ENCODE measurements at regions of chr15 and their contacts with region 1.

Region 1: GRCh38 chr15:95734422-95735316 is 595.8 kb upstream of the NR2F2 start:
- DNase-seq: peak; percentile 96
- H3K4me3 ChIP-seq: no peak overlapping the region
- H3K27ac ChIP-seq: peak overlapping the region; percentile 70
- H3K4me1 ChIP-seq: peaks cover 28% of the 10 kb centered on the region
- H3K27me3 ChIP-seq: no peaks in the 10 kb centered on the region
- CTCF ChIP-seq: no peak
- POLR2A ChIP-seq: peak; percentile 50

Region 2: GRCh38 chr15:95459273-95459672 is 275.4 kb before region 1 on chr15:
- CTCF ChIA-PET with region 1: no interaction called
- POLR2A ChIA-PET with region 1: no interaction called
- dilution Hi-C with region 1: no loop called
- intact Hi-C with region 1: loop called (anchors 2 kb)
- DNase-seq: peak; percentile 90
- H3K4me3 ChIP-seq: peak overlapping the region in 1 of 3 experiments; percentile 51
- H3K27ac ChIP-seq: peak overlapping the region; percentile 85
- H3K4me1 ChIP-seq: peaks cover 41% of the 10 kb centered on the region
- H3K27me3 ChIP-seq: no peaks in the 10 kb centered on the region
- CTCF ChIP-seq: no peak
- POLR2A ChIP-seq: peak; percentile 65

Region 3: GRCh38 chr15:95669146-95669939 is 65.3 kb before region 1 on chr15:
- CTCF ChIA-PET with region 1: no interaction called
- POLR2A ChIA-PET with region 1: interaction called, 20 read pairs
- dilution Hi-C with region 1: no loop called
- intact Hi-C with region 1: no loop called
- DNase-seq: peak; percentile 79
- H3K4me3 ChIP-seq: peak overlapping the region in 1 of 3 experiments; percentile 41
- H3K27ac ChIP-seq: peak overlapping the region; percentile 16
- H3K4me1 ChIP-seq: no peaks in the 10 kb centered on the region
- H3K27me3 ChIP-seq: no peaks in the 10 kb centered on the region
- CTCF ChIP-seq: no peak
- POLR2A ChIP-seq: no peak

Region 4: GRCh38 chr15:95760501-95760900 is 25.8 kb after region 1 on chr15:
- CTCF ChIA-PET with region 1: no interaction called
- POLR2A ChIA-PET with region 1: no interaction called
- dilution Hi-C with region 1: no loop called
- intact Hi-C with region 1: loop called (anchors 1 kb)
- DNase-seq: peak; percentile 23
- H3K4me3 ChIP-seq: no peak overlapping the region
- H3K27ac ChIP-seq: no peak overlapping the region
- H3K4me1 ChIP-seq: peaks cover 10% of the 10 kb centered on the region
- H3K27me3 ChIP-seq: no peaks in the 10 kb centered on the region
- CTCF ChIP-seq: no peak
- POLR2A ChIP-seq: no peak

Region 5: GRCh38 chr15:95884276-95884675 is 149.6 kb after region 1 on chr15:
- CTCF ChIA-PET with region 1: no interaction called
- POLR2A ChIA-PET with region 1: no interaction called
- dilution Hi-C with region 1: no loop called
- intact Hi-C with region 1: loop called (anchors 2 kb)
- DNase-seq: no peak
- H3K4me3 ChIP-seq: no peak overlapping the region
- H3K27ac ChIP-seq: no peak overlapping the region
- H3K4me1 ChIP-seq: peaks cover 22% of the 10 kb centered on the region
- H3K27me3 ChIP-seq: no peaks in the 10 kb centered on the region
- CTCF ChIP-seq: no peak
- POLR2A ChIP-seq: no peak

Region 6: GRCh38 chr15:96273317-96274086 is 538.8 kb after region 1 on chr15:
- CTCF ChIA-PET with region 1: no interaction called
- POLR2A ChIA-PET with region 1: no interaction called
- dilution Hi-C with region 1: no loop called
- intact Hi-C with region 1: loop called (anchors 2 kb)
- DNase-seq: peak; percentile 94
- H3K4me3 ChIP-seq: no peak overlapping the region
- H3K27ac ChIP-seq: peak overlapping the region; percentile 90
- H3K4me1 ChIP-seq: peaks cover 41% of the 10 kb centered on the region
- H3K27me3 ChIP-seq: no peaks in the 10 kb centered on the region
- CTCF ChIP-seq: no peak
- POLR2A ChIP-seq: peak; percentile 84